Transverse colon (tissue), 4 donors: ENCODE measurements at regions of chrX and their contacts with region 1.

Region 1: DNA sequence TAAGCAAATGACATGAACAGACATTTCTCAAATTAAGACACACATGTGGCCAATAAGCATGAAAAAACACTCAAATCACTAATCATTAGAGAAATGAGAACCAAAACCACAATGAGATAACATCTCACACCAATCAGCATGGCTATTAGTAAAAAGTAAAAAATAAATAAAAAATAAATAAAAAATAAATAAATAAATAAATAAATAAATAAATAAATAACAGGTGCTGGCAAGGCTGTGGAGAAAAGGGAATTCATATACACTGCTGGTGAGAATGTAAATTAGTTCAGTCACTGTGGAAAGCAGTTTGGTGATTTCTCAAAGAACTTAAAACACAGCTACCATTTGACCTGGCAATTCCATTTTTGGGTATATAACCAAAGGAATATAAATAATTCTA is 167.1 kb upstream of the CNKSR2 start:
- DNase-seq: no peak
- H3K4me3 ChIP-seq: no peak overlapping the region
- H3K27ac ChIP-seq: no peak overlapping the region
- H3K4me1 ChIP-seq: no peaks in the 10 kb centered on the region
- H3K27me3 ChIP-seq: no peaks in the 10 kb centered on the region
- CTCF ChIP-seq: no peak
- EP300 ChIP-seq: no peak
- POLR2A ChIP-seq: no peak

Region 2: GRCh38 chrX:20680998-20681397 is 526.1 kb before region 1 on chrX:
- in situ Hi-C with region 1: no loop called
- intact Hi-C with region 1: no loop called
- DNase-seq: no peak
- H3K4me3 ChIP-seq: no peak overlapping the region
- H3K27ac ChIP-seq: no peak overlapping the region
- H3K4me1 ChIP-seq: no peaks in the 10 kb centered on the region
- H3K27me3 ChIP-seq: no peaks in the 10 kb centered on the region
- CTCF ChIP-seq: no peak
- EP300 ChIP-seq: no peak
- POLR2A ChIP-seq: no peak

Region 3: DNA sequence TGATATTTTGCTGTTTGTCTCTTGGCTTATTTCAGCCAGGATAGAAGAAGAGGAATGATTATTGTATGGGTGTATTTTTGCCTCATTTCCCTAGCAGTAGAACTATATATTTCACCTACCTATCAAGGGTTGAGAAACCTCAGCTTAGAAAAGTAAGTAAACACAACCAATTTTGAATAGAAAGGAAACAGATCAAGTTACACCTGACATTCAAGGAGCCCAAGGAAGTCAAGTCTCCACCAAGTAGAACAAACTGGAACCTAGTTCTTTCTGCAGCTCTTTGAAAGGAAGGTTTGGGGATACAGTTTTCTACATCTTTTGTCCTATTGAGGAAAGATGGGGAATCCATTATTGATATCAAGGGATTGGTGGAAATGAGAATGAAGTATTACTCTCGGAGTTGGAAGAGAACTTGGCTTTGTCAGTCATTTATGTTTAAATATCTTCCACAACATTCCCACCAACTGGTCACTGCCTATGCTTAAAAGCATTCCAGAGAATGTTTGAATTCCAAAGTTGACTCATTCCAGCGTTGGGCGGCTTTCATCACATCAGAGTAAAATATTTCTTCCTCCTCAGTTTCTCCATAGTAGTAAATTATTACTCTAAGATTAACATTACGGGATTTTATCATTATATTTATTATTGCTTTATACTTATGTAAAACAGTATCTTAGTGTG is 40.6 kb before region 1 on chrX:
- in situ Hi-C with region 1: no loop called
- intact Hi-C with region 1: no loop called
- DNase-seq: no peak
- H3K4me3 ChIP-seq: no peak overlapping the region
- H3K27ac ChIP-seq: no peak overlapping the region
- H3K4me1 ChIP-seq: no peaks in the 10 kb centered on the region
- H3K27me3 ChIP-seq: no peaks in the 10 kb centered on the region
- CTCF ChIP-seq: no peak
- EP300 ChIP-seq: no peak
- POLR2A ChIP-seq: no peak

Region 4: GRCh38 chrX:21176921-21177571 is 30.0 kb before region 1 on chrX:
- in situ Hi-C with region 1: no loop called
- intact Hi-C with region 1: loop called (anchors 2 kb)
- DNase-seq: no peak
- H3K4me3 ChIP-seq: no peak overlapping the region
- H3K27ac ChIP-seq: no peak overlapping the region
- H3K4me1 ChIP-seq: no peaks in the 10 kb centered on the region
- H3K27me3 ChIP-seq: no peaks in the 10 kb centered on the region
- CTCF ChIP-seq: no peak
- EP300 ChIP-seq: no peak
- POLR2A ChIP-seq: no peak

Region 5: DNA sequence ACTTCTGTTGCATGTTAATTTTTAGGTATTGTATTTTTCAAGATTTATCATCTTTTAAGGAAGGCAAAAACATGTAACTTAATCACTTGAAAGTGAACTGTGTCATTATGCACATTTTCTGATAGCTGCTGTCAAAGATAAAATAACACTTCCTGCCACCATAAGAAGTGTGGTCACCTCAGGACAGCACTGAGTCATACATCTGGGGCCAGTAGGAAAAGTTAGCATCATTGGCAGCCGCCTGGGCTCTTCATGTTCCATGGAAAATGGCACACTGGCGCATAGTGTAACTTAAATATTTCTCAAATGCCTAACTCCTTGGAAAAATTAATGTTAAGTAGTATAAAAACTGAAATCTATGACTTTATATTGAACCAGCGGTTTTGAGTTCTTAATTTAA is 191.3 kb after region 1 on chrX:
- in situ Hi-C with region 1: no loop called
- intact Hi-C with region 1: no loop called
- DNase-seq: no peak
- H3K4me3 ChIP-seq: no peak overlapping the region
- H3K27ac ChIP-seq: no peak overlapping the region
- H3K4me1 ChIP-seq: no peaks in the 10 kb centered on the region
- H3K27me3 ChIP-seq: no peaks in the 10 kb centered on the region
- CTCF ChIP-seq: no peak
- EP300 ChIP-seq: no peak
- POLR2A ChIP-seq: no peak